Left ventricle myocardium inferior (tissue), 1 donor: ENCODE measurements at regions of chr2 and their contacts with region 1.

Region 1: DNA sequence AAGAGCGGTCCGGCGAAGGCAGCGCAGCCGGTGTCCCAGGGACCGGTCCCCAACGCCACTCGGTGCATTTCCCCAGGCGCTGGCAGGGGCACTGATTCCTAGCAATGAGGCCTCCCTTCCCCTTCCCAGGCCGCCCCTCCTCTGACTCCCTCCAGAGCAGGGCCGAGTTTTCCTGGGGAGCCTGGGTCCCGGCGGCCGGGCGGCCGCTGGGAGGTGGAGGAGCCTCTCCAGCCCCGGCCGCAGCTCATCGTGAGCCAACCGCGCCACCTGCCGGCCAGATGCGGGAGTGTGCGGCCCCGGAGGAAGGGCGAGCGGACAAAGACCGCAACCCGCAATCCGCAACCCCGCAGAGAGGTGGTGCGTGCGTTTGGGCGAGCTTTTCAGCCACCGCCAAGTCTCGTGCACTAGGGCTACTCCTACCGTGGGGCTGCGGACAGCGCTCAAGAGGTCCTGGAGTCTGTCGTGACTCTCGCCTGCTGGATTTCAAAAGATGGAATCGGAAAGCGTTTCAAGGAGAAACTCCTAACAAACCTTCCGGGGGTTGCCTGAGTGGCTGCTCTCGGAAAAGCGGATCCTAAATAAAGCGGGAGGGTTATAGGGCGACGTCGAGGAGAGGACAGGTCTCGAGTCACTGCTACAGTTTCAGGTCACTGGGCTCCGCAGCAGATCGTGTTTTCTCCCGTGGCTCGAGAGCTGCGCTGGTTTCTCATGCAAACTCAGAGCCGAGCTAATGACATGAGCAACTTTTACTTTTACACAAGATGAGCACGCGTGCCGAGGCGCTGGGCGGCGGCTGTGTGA is 1.5 kb upstream of the EPHA4 start:
- DNase-seq: peak; percentile 86
- H3K4me3 ChIP-seq: peak overlapping the region; percentile 89
- H3K27ac ChIP-seq: peak overlapping the region; percentile 93
- H3K4me1 ChIP-seq: peaks cover 50% of the 10 kb centered on the region
- H3K27me3 ChIP-seq: peaks cover 52% of the 10 kb centered on the region
- CTCF ChIP-seq: peak; percentile 98

Region 2: GRCh38 chr2:220687231-220687843 is 886.3 kb before region 1 on chr2:
- intact Hi-C with region 1: loop called (anchors 5 kb)
- DNase-seq: peak; percentile 60
- H3K4me3 ChIP-seq: no peak overlapping the region
- H3K27ac ChIP-seq: no peak overlapping the region
- H3K4me1 ChIP-seq: no peaks in the 10 kb centered on the region
- H3K27me3 ChIP-seq: no peaks in the 10 kb centered on the region
- CTCF ChIP-seq: peak; percentile 94

Region 3: GRCh38 chr2:221104361-221104811 is 469.2 kb before region 1 on chr2:
- intact Hi-C with region 1: loop called (anchors 10 kb)
- DNase-seq: peak; percentile 84
- H3K4me3 ChIP-seq: peak overlapping the region; percentile 42
- H3K27ac ChIP-seq: peak overlapping the region; percentile 76
- H3K4me1 ChIP-seq: peaks cover 25% of the 10 kb centered on the region
- H3K27me3 ChIP-seq: no peaks in the 10 kb centered on the region
- CTCF ChIP-seq: peak; percentile 56